Activated naive CD4-positive, alpha-beta T cell treated with anti-CD3 and anti-CD28 coated beads for 36 hours (primary cell): ENCODE measurements at regions of chr4 and their contacts with region 1.

Region 1: GRCh38 chr4:108204518-108204917 is 35.8 kb upstream of the LEF1 start:
- DNase-seq: no peak
- H3K4me3 Mint-ChIP-seq: no peak overlapping the region
- H3K27ac Mint-ChIP-seq: no peak overlapping the region
- H3K4me1 Mint-ChIP-seq: peaks cover 31% of the 10 kb centered on the region
- H3K27me3 Mint-ChIP-seq: no peaks in the 10 kb centered on the region

Region 2: DNA sequence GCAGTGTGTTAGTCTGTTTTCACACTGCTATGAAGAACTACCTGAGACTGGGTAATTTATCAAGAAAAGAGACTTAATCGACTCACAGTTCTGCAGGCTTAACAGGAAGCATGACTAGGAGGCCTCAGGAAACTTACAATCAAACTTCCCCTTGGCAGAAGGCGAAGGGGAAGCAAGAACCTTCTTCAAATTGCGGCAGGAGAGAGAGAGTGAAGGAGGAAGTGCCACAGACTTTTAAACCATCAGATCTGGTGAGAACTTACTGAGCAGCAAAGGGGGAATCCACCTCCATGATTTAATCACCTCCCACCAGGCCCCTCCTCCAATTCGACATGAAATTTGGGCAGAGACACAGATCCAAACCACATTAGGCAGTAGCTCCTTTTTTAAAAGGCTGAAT is 23.4 kb after region 1 on chr4:
- CTCF ChIA-PET with region 1: no interaction called
- intact Hi-C with region 1: loop called (anchors 2 kb)
- DNase-seq: peak; percentile 20
- H3K4me3 Mint-ChIP-seq: no peak overlapping the region
- H3K27ac Mint-ChIP-seq: no peak overlapping the region
- H3K4me1 Mint-ChIP-seq: peaks cover 7% of the 10 kb centered on the region
- H3K27me3 Mint-ChIP-seq: no peaks in the 10 kb centered on the region

Region 3: GRCh38 chr4:108425988-108426387 is 221.5 kb after region 1 on chr4:
- CTCF ChIA-PET with region 1: no interaction called
- intact Hi-C with region 1: loop called (anchors 2 kb)
- DNase-seq: no peak
- H3K4me3 Mint-ChIP-seq: no peak overlapping the region
- H3K27ac Mint-ChIP-seq: peak overlapping the region; percentile 48
- H3K4me1 Mint-ChIP-seq: peaks cover 21% of the 10 kb centered on the region
- H3K27me3 Mint-ChIP-seq: no peaks in the 10 kb centered on the region